ENCODE measurements at regions of chr12 and their contacts with region 1.

Region 1: DNA sequence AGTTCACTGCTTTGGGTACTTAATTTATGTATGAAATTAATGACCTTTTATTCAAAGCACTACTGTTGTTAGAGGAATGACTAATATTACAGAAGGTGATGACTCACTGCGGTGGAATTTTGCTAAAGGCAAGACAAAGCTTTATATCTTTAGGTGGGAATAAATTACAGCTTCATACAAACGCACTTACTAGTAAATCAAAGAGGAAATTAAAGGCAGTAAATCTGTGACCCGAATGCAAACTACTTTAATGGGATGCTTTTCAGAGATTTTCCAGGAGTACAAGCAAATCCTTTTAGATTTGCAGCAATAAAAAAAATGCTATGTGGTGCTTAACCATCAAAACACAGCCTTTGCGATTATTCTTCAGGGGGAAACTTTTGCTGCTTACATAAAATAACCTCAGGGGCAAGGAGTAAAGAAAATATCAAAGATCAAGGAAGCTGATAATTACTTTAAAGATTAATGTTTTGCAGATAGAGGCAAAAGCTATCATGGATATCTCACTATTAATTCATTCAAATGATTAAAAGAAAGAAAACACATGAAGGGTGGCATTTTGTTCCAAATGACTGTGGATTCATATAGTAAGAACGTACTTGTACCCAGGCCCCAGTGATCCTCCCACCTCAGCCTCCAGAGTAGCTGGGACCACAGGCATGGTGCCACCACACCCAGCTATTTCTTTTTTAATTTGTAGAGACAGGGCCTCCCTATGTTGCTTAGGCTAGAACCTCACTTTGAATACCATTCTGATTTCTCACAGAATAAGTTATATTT is 98.9 kb downstream of the DENND5B start:
- DNase-seq: peak; percentile 94
- H3K4me3 ChIP-seq: peak overlapping the region in 1 of 3 experiments; percentile 26
- H3K27ac ChIP-seq: peak overlapping the region; percentile 90
- H3K4me1 ChIP-seq: peaks cover 26% of the 10 kb centered on the region
- H3K27me3 ChIP-seq: no peaks in the 10 kb centered on the region
- CTCF ChIP-seq: no peak
- POLR2A ChIP-seq: no peak

Region 2: DNA sequence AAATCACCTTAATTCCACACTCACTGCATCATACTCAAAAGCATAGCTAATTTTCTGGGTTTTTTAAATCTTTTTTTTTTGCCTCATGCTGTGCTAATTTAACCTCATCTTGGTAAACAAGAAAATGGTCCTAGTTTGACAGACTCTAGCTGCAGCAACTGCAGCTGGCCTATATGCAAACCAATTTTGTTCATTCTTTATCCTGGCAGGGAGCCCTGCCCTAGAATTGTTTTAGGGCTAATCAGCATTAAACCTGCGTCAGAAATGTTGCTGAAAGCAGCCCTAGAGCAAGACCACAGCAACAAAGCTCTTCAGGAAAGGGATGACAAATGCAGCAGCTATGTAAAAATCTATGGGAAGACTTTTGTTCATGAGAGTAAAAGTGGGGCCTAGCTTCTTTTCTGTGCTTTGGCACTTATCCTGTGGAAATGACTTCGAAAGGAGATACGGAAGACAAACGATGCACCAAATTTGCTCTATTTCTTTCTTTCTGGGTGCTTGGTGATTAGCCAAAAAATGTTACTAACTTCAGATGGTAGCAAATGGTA is 26.7 kb after region 1 on chr12:
- CTCF ChIA-PET with region 1: interaction called, 13 read pairs
- POLR2A ChIA-PET with region 1: interaction called, 4 read pairs
- dilution Hi-C with region 1: no loop called
- intact Hi-C with region 1: loop called (anchors 1 kb)
- DNase-seq: peak; percentile 99
- H3K4me3 ChIP-seq: no peak overlapping the region
- H3K27ac ChIP-seq: peak overlapping the region; percentile 97
- H3K4me1 ChIP-seq: peaks cover 41% of the 10 kb centered on the region
- H3K27me3 ChIP-seq: no peaks in the 10 kb centered on the region
- CTCF ChIP-seq: no peak
- POLR2A ChIP-seq: no peak

Measured in endothelial cell of umbilical vein (primary cell).